ENCODE measurements at regions of chr21 and their contacts with region 1.

Region 1: DNA sequence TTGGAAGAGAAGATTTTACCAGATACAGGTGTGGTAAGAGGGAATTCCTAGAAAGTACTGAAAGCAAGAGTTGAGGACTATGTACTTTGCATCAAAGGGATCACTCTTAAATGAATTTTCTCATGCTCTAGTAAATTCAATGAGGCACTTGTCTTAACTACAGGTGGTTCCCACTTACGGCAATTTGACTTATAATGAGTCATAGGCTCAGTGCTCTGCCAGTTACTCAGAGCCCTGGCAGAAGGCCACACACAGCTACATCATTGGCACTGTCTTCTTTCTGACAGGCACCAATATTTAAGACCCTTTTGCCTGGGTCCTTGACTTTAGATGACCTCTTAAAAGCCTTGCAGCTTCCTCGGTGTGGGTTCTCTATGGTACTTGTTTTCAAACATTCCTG is 15.9 kb upstream of the ADAMTS5 start:
- DNase-seq: no peak
- H3K4me3 ChIP-seq: no peak overlapping the region
- H3K27ac ChIP-seq: no peak overlapping the region
- H3K4me1 ChIP-seq: no peaks in the 10 kb centered on the region
- H3K27me3 ChIP-seq: no peaks in the 10 kb centered on the region
- CTCF ChIP-seq: no peak
- POLR2A ChIP-seq: no peak

Region 2: GRCh38 chr21:27448960-27449359 is 466.2 kb after region 1 on chr21:
- intact Hi-C with region 1: no loop called
- DNase-seq: no peak
- H3K4me3 ChIP-seq: no peak overlapping the region
- H3K27ac ChIP-seq: no peak overlapping the region
- H3K4me1 ChIP-seq: no peaks in the 10 kb centered on the region
- H3K27me3 ChIP-seq: no peaks in the 10 kb centered on the region
- CTCF ChIP-seq: no peak
- POLR2A ChIP-seq: no peak

Region 3: GRCh38 chr21:28455253-28455600 is 1472.5 kb after region 1 on chr21:
- intact Hi-C with region 1: loop called (anchors 10 kb)
- DNase-seq: no peak
- H3K4me3 ChIP-seq: peak overlapping the region in 1 of 3 donors; percentile 6
- H3K27ac ChIP-seq: peak overlapping the region; percentile 4 to 44
- H3K4me1 ChIP-seq: no peaks in the 10 kb centered on the region
- H3K27me3 ChIP-seq: no peaks in the 10 kb centered on the region
- CTCF ChIP-seq: no peak
- POLR2A ChIP-seq: no peak